AG04450 (cell line): ENCODE measurements at regions of chr16 and their contacts with region 1.

Region 1: DNA sequence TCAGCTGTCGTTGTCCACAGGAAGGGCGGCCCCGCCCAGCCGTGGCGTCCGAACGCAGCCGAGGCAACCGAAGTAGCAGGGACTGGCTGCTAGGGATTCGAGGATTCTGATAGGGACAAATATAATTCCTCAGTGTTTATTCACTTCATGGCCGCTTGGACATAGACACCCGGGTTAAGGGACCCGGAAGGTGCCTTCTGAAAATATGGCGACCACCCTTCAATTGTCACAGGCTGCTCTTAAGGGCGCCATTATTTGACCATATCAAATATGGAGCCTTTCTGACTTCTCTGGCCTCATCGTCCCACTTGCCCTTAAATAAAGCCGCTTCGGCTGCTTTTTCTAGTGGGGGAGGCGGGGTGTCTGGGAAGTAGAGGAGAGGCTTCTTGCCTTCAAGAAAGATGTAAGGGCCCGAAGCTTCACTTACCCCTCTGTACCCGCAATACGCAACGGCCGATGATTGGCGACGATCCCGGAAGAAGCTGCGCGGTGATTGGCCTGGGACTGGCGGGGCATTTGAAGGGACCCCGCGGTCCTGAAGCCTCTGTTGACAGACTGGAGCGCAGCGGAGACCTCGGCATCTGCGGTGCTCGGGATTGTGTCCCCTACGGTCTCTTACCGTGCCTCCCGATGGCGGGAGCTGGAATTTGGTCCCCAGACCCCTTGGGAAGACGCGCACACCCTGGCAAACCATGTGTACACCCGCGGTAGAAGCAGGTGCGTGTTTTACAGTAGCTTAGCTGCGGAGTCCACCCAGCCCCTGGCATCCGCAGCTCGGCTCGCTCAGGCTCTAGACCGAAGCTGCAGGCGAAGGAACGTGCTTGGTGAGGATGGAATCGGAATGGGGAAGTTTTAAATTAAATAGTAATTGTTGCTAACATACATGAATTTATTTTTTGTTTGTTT is at the start of gene ZNF688:
- DNase-seq: peak; percentile 91
- H3K4me3 ChIP-seq: peak within 1 kb of the TSS; percentile 69
- H3K27ac ChIP-seq: peak within 1 kb of the TSS; percentile 65
- H3K27me3 ChIP-seq: no peaks in the 10 kb centered on the region
- CTCF ChIP-seq: no peak
- polyA plus RNA-seq, gene ZNF688: 5.5 and 6.8 TPM in 2 replicates

Region 2: GRCh38 chr16:30557957-30558788 is 13.8 kb before region 1 on chr16 and contains the start of gene ZNF764:
- CTCF ChIA-PET with region 1: no interaction called
- POLR2A ChIA-PET with region 1: interaction called, 12 read pairs
- DNase-seq: peak; percentile 90
- H3K4me3 ChIP-seq: peak within 1 kb of the TSS; percentile 77
- H3K27ac ChIP-seq: peak within 1 kb of the TSS; percentile 84
- H3K27me3 ChIP-seq: no peaks in the 10 kb centered on the region
- CTCF ChIP-seq: no peak
- polyA plus RNA-seq, gene ZNF764: 2.5 and 3.2 TPM in 2 replicates

Region 3: DNA sequence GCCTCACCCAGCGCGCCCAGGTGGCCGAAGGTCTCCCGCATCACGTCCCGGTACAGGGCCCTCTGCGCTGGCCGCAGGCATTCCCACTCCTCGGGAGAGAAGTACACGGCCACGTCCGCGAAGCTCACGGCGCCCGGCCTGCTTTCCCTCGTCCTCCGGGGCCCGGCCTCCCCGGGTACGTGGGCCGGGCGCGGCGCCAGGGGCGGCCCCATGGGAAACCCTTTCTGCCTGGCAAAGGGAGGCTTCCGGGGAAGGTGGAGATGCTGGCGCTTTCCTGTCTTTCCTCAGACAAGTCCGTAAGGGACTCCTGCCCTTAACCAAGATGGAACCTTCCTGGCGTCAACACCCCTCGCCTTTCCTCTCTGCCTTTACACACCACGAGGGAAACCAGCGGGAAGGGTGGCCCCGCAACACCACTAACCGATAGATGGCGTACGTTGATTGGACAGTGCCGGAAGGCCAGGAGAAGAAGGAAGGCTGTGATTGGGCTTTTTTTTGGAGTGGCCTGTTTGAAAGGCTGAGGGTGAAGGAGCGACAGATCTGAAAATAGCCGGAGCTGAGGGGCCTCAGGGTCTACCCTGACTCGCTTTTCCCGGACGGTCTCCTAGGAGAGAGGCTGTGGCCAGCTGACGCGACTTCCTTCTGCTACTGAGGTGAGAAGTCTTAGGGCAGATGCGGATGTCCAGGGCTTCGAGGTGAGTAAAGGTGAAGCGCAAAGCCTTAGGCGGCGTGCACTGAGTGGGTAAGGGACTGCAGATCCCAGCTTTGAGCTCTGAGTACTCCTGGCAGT is 13.6 kb after region 1 on chr16 and contains the start of gene ZNF785:
- CTCF ChIA-PET with region 1: no interaction called
- POLR2A ChIA-PET with region 1: interaction called, 12 read pairs
- DNase-seq: peak; percentile 96
- H3K4me3 ChIP-seq: peak within 1 kb of the TSS; percentile 78
- H3K27ac ChIP-seq: peak within 1 kb of the TSS; percentile 70
- H3K27me3 ChIP-seq: no peaks in the 10 kb centered on the region
- CTCF ChIP-seq: no peak
- polyA plus RNA-seq, gene ZNF785: 4.7 and 6.6 TPM in 2 replicates